ENCODE measurements at regions of chr5 and their contacts with region 1.

Region 1: DNA sequence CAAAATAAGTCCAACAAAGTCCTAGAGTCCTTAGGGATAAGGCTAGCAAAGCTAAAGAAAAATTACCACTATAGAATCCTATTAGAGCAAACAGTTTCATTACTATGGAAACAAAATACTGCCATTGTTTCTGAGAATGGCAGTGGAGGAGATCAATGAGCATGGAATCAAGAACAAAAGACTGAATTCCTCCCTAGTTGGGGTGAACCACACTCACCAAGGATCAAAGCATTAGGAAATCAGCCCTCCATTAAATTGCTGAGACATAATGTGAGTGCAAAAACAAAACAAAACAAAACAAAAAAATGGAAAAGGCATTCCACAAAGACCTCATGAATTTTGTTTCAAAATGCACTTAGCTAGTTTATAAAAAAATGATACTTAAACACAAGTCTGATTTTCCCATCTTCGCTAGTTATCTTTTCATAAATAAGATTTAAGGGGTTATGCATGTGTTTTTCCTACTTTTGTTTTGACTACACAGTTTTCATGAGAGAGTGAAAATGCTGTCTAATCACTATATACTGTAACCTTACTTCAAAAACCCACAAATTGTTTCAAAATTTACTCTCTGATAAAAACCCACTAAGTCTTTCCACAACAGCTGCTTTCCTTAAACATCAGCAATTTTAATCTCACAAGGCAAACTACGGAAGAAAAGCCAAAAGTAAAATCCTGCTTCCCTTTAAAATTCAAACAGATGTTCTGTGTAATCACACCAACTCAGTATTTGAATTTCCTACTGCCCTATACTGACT is 9.7 kb downstream of the SERINC5 start:
- DNase-seq: peak in 1 of 2 experiments; percentile 67
- H3K4me3 ChIP-seq: peak overlapping the region; percentile 40; the same call in 1 of the 2 replicates
- H3K27ac ChIP-seq: peak overlapping the region; percentile 98
- H3K4me1 ChIP-seq: peaks cover 52% of the 10 kb centered on the region
- H3K27me3 ChIP-seq: no peaks in the 10 kb centered on the region
- CTCF ChIP-seq: no peak

Region 2: GRCh38 chr5:78387468-78388153 is 1858.6 kb before region 1 on chr5:
- CTCF ChIA-PET with region 1: no interaction called
- POLR2A ChIA-PET with region 1: no interaction called
- intact Hi-C with region 1: no loop called
- DNase-seq: no peak
- H3K4me3 ChIP-seq: no peak overlapping the region
- H3K27ac ChIP-seq: no peak overlapping the region
- H3K4me1 ChIP-seq: no peaks in the 10 kb centered on the region
- H3K27me3 ChIP-seq: no peaks in the 10 kb centered on the region
- CTCF ChIP-seq: no peak

Region 3: DNA sequence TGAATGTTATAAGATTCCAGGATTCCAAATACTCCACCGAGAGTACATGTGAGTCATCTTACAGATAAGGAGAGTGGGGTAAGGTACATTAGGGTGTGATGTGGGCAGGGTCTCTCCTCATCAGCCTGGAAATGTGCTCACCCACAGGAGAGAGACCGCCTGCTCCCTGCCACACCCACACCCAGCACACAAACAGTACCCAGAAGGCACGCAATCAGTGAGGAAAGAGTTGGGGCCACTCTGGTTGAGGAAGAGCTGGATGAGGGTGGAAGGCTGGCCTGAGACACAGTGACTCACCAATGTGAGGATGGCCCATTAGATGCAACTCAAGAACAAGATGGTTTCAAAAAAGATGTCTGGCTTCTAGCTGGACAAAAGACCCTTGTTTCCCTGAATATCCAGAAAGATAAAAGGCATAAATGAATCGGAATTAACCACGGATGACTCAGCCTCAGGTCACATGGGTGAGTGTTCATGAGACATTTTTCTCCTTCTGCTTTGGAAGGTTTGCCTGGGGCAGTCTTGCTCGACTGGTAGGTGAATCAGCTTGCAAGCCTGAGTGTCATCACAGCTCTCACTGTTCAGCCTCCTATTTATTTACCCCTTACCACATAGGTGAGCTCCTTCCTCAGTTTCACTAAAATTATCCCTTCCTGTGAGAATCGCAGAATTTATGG is 1546.5 kb before region 1 on chr5:
- CTCF ChIA-PET with region 1: no interaction called
- POLR2A ChIA-PET with region 1: interaction called, 4 read pairs
- intact Hi-C with region 1: loop called (anchors 5 kb)
- DNase-seq: peak; percentile 85 to 98
- H3K4me3 ChIP-seq: peak overlapping the region; percentile 37; the same call in 1 of the 2 replicates
- H3K27ac ChIP-seq: peak overlapping the region; percentile 99
- H3K4me1 ChIP-seq: peaks cover 38% of the 10 kb centered on the region
- H3K27me3 ChIP-seq: no peaks in the 10 kb centered on the region
- CTCF ChIP-seq: no peak

Region 4: DNA sequence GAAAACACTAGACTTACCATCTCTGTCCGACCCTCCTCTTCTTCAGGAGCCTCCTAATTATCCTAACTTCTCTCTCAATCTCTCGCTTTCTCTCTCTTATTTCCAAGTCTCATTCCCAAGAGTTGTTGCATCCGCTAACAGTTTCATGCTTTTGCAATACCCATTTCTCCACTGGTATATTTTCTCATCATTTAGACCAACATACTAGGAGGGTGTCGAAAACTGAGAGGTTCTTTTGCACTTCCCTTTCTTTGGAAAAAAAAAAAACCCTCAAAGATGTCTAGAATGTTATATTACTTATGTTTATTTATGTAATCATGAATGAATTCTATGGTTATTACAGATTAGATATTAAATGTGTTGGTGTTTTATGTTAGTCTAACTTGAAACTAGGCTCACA is 109.5 kb after region 1 on chr5:
- CTCF ChIA-PET with region 1: no interaction called
- POLR2A ChIA-PET with region 1: no interaction called
- intact Hi-C with region 1: no loop called
- DNase-seq: no peak
- H3K4me3 ChIP-seq: no peak overlapping the region
- H3K27ac ChIP-seq: no peak overlapping the region
- H3K4me1 ChIP-seq: no peaks in the 10 kb centered on the region
- H3K27me3 ChIP-seq: no peaks in the 10 kb centered on the region
- CTCF ChIP-seq: no peak

Measured in PC-9 (cell line).